ENCODE measurements at regions of chrX and their contacts with region 1.

Region 1: DNA sequence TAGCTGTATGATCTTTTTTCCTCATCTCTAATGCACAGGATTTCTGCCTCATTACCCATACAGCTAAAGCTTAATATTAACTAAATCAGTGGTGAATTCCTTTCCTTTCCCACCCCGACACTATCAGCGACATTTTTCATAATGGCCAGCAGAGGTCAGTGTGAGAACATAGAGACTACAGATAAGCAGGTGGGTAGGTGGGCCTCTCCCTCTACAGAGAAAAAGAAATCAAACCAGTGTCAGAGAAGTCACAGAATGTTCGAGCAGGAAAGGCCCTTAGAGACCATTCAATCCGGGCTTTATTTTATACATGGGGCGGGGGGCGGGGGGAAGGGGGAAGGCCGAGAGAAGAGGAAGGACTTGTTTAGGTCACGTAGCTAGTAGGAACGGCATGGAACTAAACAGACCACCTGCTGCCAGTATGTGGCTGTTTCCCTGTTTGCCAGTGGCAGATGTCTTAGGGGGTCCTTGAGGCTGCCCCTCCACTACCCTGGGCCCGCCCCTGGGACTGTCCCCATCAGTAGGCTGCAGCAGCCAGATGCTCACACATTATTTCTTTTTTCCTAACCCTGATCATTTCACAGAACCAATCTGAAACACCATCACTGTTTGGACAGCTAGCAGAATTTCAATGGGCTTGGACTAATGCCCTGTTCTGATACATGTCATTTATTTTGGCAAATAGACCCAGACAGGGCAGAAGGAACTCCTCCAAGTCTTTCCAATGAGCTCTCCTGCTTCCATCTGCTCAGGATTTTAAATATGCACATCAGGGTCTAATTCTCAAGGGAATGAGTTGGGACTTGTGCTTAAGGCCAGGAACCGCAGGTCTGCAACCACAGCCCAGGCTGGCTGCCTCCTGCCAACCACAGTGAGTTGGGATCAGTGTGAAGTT is 133.4 kb downstream of the ATG4A start:
- DNase-seq: no peak
- ATAC-seq: peak; percentile 55
- H3K4me3 ChIP-seq: no peak overlapping the region
- H3K27ac ChIP-seq: peak overlapping the region; percentile 48
- H3K4me1 ChIP-seq: no peaks in the 10 kb centered on the region
- H3K27me3 ChIP-seq: no peaks in the 10 kb centered on the region

Region 2: GRCh38 chrX:108309144-108309543 is 84.2 kb after region 1 on chrX:
- intact Hi-C with region 1: loop called in 1 of 4 experiments (anchors 5 kb)
- DNase-seq: no peak
- ATAC-seq: no peak
- H3K4me3 ChIP-seq: no peak overlapping the region
- H3K27ac ChIP-seq: no peak overlapping the region
- H3K4me1 ChIP-seq: no peaks in the 10 kb centered on the region
- H3K27me3 ChIP-seq: no peaks in the 10 kb centered on the region